GM12878 (cell line): ENCODE measurements at regions of chr4 and their contacts with region 1.

Region 1: DNA sequence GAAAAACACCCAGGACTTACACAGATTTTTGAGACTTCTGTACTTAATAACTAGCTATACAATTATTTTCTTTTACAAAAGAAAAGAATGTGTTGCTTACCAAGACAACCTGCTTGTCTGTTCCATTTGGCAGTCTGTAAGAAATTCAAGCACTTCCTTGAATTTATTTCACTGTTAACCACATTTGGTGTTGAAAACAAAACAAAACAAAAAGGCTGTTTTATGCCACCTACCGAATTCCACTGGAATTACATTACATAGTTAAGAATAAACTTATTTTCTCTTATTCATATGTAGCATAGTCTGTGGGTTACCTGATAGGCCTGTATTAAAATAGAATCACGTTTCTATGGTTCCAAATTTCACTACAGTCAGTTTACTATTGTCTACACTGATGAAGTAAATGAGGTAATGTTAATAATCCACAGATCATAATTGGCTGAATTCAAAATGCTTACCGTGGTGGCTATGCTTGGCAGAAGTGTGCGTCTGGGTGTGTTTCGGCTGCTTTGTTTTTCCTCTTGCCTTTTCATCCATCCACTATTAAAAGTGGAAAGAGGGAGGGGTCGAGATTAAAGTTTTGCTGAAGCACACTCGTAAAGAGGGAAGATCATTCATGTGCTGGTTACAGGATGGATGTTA is at the start of gene TLR1:
- DNase-seq: peak; percentile 62
- ATAC-seq: peak; percentile 67
- H3K4me3 ChIP-seq: peak within 1 kb of the TSS; percentile 41
- H3K27ac ChIP-seq: peak within 1 kb of the TSS; percentile 86
- H3K4me1 ChIP-seq: peaks cover 20% of the 10 kb centered on the region
- H3K27me3 ChIP-seq: no peaks in the 10 kb centered on the region
- CTCF ChIP-seq: peak; percentile 22 to 47 (median 38); a peak in 5 of 6 replicates
- EP300 ChIP-seq: no peak
- POLR2A ChIP-seq: no peak
- RAD21 ChIP-seq: peak; percentile 64
- polyA plus RNA-seq, gene TLR1: 9.3 to 9.5 TPM

Region 2: DNA sequence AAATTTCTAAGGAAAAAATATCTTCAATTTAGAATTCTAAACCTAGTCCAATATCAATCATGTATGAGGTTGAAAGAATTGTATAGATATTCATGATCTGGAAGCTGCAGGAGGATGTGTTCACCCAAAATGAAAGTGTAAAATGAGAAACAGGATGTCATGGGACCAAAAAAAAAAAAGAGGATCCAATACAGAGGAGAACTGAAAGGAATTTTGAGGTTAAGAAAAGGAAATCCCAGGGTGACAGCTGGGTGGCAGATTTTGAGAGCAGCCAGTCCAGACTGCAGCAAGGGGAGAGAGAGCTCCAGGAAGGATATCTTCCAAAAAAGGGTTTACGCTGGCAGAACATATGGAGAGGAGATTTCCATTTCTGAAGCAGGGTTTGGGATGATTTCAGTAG is 60.9 kb before region 1 on chr4:
- CTCF ChIA-PET with region 1: no interaction called
- POLR2A ChIA-PET with region 1: no interaction called
- RAD21 ChIA-PET with region 1: interaction called, 3 read pairs
- SMC1A ChIA-PET with region 1: interaction called, 10 read pairs
- in situ Hi-C with region 1: no loop called
- intact Hi-C with region 1: no loop called
- DNase-seq: no peak
- ATAC-seq: peak; percentile 55
- H3K4me3 ChIP-seq: peak overlapping the region; percentile 15; the same call in 1 of the 2 replicates
- H3K27ac ChIP-seq: no peak overlapping the region
- H3K4me1 ChIP-seq: peaks cover 6% of the 10 kb centered on the region; the same call in 1 of the 2 replicates
- H3K27me3 ChIP-seq: no peaks in the 10 kb centered on the region
- CTCF ChIP-seq: no peak
- EP300 ChIP-seq: no peak
- POLR2A ChIP-seq: no peak
- RAD21 ChIP-seq: no peak

Region 3: GRCh38 chr4:38788327-38788726 is 16.4 kb before region 1 on chr4:
- CTCF ChIA-PET with region 1: interaction called, 175 read pairs
- POLR2A ChIA-PET with region 1: interaction called, 10 read pairs
- RAD21 ChIA-PET with region 1: interaction called, 199 read pairs
- SMC1A ChIA-PET with region 1: interaction called, 278 read pairs
- in situ Hi-C with region 1: no loop called
- intact Hi-C with region 1: no loop called
- DNase-seq: no peak
- ATAC-seq: no peak
- H3K4me3 ChIP-seq: no peak overlapping the region
- H3K27ac ChIP-seq: no peak overlapping the region
- H3K4me1 ChIP-seq: peaks cover 22% of the 10 kb centered on the region
- H3K27me3 ChIP-seq: no peaks in the 10 kb centered on the region
- CTCF ChIP-seq: no peak
- EP300 ChIP-seq: no peak
- POLR2A ChIP-seq: no peak
- RAD21 ChIP-seq: no peak

Region 4: DNA sequence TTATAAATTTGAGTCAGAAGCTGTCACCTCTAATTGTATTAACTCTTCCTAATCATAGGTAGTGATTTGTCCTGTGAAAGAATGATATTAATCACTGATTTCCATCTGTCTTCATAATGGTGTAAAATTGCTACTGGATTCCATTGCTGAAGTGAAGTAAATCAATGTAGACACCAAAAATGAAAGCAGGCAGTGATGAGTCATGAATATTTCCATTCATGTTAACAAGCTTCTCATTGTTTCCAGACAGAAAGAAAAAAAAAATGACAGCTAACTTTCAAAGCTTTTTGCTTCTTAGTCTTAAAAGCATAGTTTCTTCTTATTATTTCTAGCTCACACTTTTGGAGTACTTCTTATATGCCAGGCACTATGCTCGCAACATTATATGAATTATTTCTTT is 84.4 kb after region 1 on chr4:
- CTCF ChIA-PET with region 1: interaction called, 3 read pairs
- POLR2A ChIA-PET with region 1: interaction called, 21 read pairs
- RAD21 ChIA-PET with region 1: interaction called, 10 read pairs
- SMC1A ChIA-PET with region 1: interaction called, 25 read pairs
- in situ Hi-C with region 1: no loop called
- intact Hi-C with region 1: no loop called
- DNase-seq: peak; percentile 58
- ATAC-seq: peak; percentile 85
- H3K4me3 ChIP-seq: no peak overlapping the region
- H3K27ac ChIP-seq: peak overlapping the region; percentile 64; the same call in 1 of the 2 replicates
- H3K4me1 ChIP-seq: peaks cover 4% of the 10 kb centered on the region
- H3K27me3 ChIP-seq: no peaks in the 10 kb centered on the region
- CTCF ChIP-seq: no peak
- EP300 ChIP-seq: peak; percentile 68 to 86; a peak in 3 of 4 replicates
- POLR2A ChIP-seq: no peak
- RAD21 ChIP-seq: no peak

Region 5: DNA sequence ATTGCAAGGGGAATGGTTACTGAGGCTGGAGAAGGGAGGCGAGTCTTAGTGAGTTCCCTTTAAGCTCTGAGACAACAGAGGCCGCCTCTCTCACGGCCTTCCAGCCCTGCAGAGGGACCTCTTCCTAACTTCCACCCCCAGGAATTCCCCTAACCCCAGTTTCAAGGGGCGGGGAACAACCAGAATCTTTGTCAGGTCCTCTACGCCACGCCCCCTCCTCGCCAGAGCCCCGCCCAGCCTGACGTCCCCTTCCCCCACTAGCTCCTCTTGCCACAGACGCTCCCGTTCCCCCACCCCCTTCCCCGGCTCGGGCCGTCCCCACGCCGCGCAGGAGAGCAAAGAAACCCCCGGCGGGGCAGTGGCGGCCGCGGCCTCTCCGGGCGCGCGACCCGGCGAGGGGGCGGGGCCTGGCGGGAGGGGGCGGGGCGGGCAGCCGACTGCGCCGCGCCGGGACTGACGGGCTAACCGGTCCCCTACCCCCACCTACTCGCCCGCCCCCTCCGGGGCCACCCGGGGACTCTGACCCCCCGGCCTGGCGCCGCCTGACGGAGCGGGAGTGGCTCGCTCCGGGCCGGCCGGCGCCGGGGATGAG is 239.7 kb after region 1 on chr4:
- CTCF ChIA-PET with region 1: interaction called, 5 read pairs
- POLR2A ChIA-PET with region 1: interaction called, 3 read pairs
- RAD21 ChIA-PET with region 1: interaction called, 13 read pairs
- SMC1A ChIA-PET with region 1: interaction called, 3 read pairs
- in situ Hi-C with region 1: no loop called
- intact Hi-C with region 1: no loop called
- DNase-seq: peak; percentile 90
- ATAC-seq: peak; percentile 83
- H3K4me3 ChIP-seq: peak overlapping the region; percentile 83
- H3K27ac ChIP-seq: peak overlapping the region; percentile 81
- H3K4me1 ChIP-seq: peaks cover 14% of the 10 kb centered on the region
- H3K27me3 ChIP-seq: no peaks in the 10 kb centered on the region
- CTCF ChIP-seq: peak in 1 of 3 experiments; percentile 23; a peak in 1 of 6 replicates
- EP300 ChIP-seq: peak in 1 of 2 experiments; percentile 52; a peak in 1 of 4 replicates
- POLR2A ChIP-seq: peak; percentile 74
- RAD21 ChIP-seq: no peak